PC-3 (cell line): ENCODE measurements at regions of chr14 and their contacts with region 1.

Region 1: GRCh38 chr14:51593397-51593796 is 58.3 kb upstream of the FRMD6 start:
- DNase-seq: no peak
- ATAC-seq: no peak
- H3K4me3 ChIP-seq: no peak overlapping the region
- H3K27ac ChIP-seq: no peak overlapping the region
- H3K4me1 ChIP-seq: no peaks in the 10 kb centered on the region
- H3K27me3 ChIP-seq: no peaks in the 10 kb centered on the region
- CTCF ChIP-seq: no peak

Region 2: GRCh38 chr14:51318813-51319597 is 274.4 kb before region 1 on chr14:
- CTCF ChIA-PET with region 1: no interaction called
- POLR2A ChIA-PET with region 1: interaction called, 52 read pairs
- intact Hi-C with region 1: no loop called
- DNase-seq: no peak
- ATAC-seq: no peak
- H3K4me3 ChIP-seq: no peak overlapping the region
- H3K27ac ChIP-seq: no peak overlapping the region
- H3K4me1 ChIP-seq: no peaks in the 10 kb centered on the region
- H3K27me3 ChIP-seq: no peaks in the 10 kb centered on the region
- CTCF ChIP-seq: no peak

Region 3: GRCh38 chr14:51554953-51555352 is 38.4 kb before region 1 on chr14:
- CTCF ChIA-PET with region 1: no interaction called
- POLR2A ChIA-PET with region 1: no interaction called
- intact Hi-C with region 1: no loop called
- DNase-seq: peak; percentile 67
- ATAC-seq: peak; percentile 50
- H3K4me3 ChIP-seq: peak overlapping the region; percentile 47
- H3K27ac ChIP-seq: peak overlapping the region; percentile 72
- H3K4me1 ChIP-seq: peaks cover 47% of the 10 kb centered on the region
- H3K27me3 ChIP-seq: no peaks in the 10 kb centered on the region
- CTCF ChIP-seq: peak; percentile 67

Region 4: DNA sequence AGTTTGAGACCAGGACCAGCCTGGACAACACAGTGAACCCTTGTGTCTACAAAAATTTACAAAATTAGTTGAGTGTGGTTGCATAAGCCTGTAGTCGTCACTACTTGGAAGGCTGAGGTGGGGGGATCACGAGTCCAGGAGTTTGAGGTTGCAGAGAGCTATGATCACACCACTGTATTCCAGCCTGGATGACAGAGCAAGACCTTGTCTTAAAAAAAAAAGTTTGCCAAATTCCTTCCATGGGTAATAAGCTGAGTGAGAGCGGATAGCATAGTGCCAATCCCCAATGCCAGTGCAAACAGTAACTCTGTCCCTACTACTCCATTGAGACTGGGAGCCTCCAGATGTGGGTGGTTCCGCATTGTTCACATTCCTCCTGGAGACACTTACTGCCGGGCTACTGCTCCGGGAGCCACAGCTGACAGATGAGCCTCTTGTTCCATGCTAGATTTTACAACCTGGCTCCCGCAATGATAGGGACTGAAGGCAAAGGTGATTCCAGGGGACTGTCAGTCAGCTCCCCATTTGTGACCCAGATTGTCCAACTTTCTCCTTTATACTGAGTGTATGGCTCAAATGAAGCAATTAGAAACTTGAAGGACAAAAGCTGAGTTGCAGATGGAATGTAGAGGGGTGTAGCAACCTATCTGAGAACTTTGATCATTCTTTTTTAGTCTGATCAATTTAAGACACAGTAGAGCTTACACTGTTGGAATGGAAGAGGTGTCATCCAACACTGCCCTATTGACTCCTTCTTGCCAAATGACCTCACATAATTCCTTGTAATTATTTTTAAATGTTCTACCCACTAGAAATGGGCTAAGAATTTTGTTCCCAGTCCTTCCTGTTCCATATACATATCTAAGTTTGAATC is 44.9 kb after region 1 on chr14:
- CTCF ChIA-PET with region 1: no interaction called
- POLR2A ChIA-PET with region 1: interaction called, 10 read pairs
- intact Hi-C with region 1: no loop called
- DNase-seq: no peak
- ATAC-seq: peak; percentile 17; the same call in 1 of the 2 replicates
- H3K4me3 ChIP-seq: no peak overlapping the region
- H3K27ac ChIP-seq: no peak overlapping the region
- H3K4me1 ChIP-seq: peaks cover 6% of the 10 kb centered on the region
- H3K27me3 ChIP-seq: no peaks in the 10 kb centered on the region
- CTCF ChIP-seq: no peak